ENCODE measurements at regions of chr12 and their contacts with region 1.

Region 1: GRCh38 chr12:50314629-50315312 is 31.5 kb upstream of the LIMA1 start:
- DNase-seq: no peak
- ATAC-seq: peak in 1 of 4 donors; percentile 51
- H3K4me3 ChIP-seq: no peak overlapping the region
- H3K27ac ChIP-seq: no peak overlapping the region
- H3K4me1 ChIP-seq: peaks cover 7% of the 10 kb centered on the region
- H3K27me3 ChIP-seq: no peaks in the 10 kb centered on the region
- CTCF ChIP-seq: peak; percentile 57

Region 2: DNA sequence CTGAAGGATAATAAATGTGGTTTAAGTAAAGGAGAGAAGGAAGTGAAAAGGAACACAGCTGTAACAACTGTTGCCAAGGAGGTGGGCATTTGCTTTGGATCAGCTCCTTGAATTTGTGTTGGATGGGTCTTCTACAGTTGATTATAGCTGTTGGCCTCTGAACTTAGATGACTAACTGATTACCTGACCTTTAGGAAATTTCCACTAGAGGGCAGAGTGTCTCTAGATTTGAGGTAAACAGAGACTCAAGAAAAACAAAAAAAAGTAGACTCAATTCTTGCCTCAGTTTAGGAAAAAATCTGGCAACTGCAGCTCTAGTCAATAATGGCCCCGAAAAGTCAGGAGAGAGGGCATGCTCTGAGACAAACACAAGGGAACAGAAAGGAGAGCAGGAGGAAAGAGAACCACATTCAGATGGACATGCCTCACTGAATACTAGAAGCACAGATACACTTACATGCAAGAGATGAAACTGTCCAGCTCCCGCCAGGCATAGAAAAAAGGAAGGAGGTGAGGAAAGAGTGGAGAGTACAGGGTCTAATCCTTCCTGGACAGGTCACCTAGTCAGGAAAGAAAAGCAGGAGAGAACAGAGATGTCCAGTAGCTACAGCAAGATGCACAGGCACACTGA is 182.2 kb before region 1 on chr12:
- intact Hi-C with region 1: loop called in 1 of 2 experiments (anchors 2 kb)
- DNase-seq: no peak
- ATAC-seq: peak in 2 of 4 donors; percentile 30 to 67
- H3K4me3 ChIP-seq: no peak overlapping the region
- H3K27ac ChIP-seq: no peak overlapping the region
- H3K4me1 ChIP-seq: no peaks in the 10 kb centered on the region
- H3K27me3 ChIP-seq: no peaks in the 10 kb centered on the region
- CTCF ChIP-seq: peak; percentile 60

Region 3: GRCh38 chr12:50187084-50187900 is 127.5 kb before region 1 on chr12:
- intact Hi-C with region 1: loop called (anchors 5 kb)
- DNase-seq: no peak
- ATAC-seq: no peak
- H3K4me3 ChIP-seq: no peak overlapping the region
- H3K27ac ChIP-seq: peak overlapping the region; percentile 50
- H3K4me1 ChIP-seq: peaks cover 27% of the 10 kb centered on the region
- H3K27me3 ChIP-seq: no peaks in the 10 kb centered on the region
- CTCF ChIP-seq: no peak

Measured in psoas muscle (tissue), 8 donors.